Right ventricle myocardium superior (tissue), 1 donor: ENCODE measurements at regions of chr7 and their contacts with region 1.

Region 1: DNA sequence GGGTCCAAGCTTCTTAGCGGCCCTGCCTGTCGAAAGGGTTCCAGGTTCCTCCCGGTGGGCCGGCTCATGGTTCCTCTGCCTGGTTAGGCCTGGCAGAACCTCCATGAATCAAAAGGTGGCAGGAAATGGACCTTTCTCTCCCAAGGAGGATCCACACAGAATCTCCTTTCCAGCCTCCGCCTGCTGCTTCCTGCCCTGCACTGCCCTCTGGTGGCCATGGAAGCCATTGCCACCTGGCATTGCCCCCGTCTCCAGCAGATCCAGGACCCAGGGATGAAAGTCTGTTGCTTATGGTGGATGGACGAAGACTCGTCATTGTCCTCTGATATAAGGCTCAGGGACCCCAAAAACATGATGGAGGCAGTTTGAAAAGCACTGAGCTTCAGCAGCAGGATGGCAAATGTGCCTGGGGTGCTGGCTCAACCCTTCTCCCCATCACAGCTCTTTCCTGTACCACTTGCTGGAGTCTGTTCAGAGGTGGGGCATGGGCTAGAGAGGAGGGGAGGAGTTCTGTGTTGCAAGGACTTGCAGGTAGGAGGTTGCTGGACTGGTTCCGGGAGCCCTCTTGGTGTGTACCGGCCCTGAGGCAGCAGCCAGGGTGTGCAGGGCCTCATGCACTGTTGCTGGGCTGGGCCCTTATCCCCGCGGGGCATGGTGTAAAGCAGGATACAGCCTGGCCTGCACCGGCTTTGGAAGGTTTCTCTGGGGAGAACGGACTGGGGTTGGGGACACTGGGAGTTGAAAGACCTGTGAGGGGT is 11.3 kb upstream of the INMT start:
- DNase-seq: peak; percentile 84
- ATAC-seq: peak; percentile 80

Region 2: DNA sequence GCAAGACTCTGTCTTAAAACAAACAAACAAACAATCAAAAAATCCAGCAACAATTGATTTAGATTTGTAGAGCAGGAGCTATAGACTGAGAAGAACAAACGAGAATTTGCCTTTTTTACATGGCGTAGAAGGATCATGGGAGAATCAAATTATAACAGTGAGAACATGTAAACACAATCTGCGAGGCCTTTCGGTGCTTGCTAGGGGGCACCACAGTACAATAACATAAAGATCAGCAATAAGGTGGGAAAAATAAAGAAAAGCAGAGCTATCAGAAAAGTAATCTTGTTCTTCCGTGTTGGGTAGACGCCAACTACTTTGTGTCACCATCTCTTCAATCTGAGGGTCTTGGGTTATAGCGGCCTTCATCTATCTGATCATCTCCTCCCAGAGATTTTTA is 344.2 kb before region 1 on chr7:
- intact Hi-C with region 1: no loop called
- DNase-seq: no peak
- ATAC-seq: no peak

Region 3: GRCh38 chr7:30625283-30625682 is 115.3 kb before region 1 on chr7:
- intact Hi-C with region 1: loop called (anchors 10 kb)
- DNase-seq: no peak
- ATAC-seq: no peak

Region 4: GRCh38 chr7:30682212-30683083 is 58.2 kb before region 1 on chr7 and contains the start of gene CRHR2:
- intact Hi-C with region 1: loop called (anchors 5 kb)
- DNase-seq: no peak
- ATAC-seq: peak; percentile 80
- total RNA-seq, gene CRHR2: 0.24 TPM

Region 5: GRCh38 chr7:30789334-30789711 is 48.7 kb after region 1 on chr7:
- intact Hi-C with region 1: loop called (anchors 5 kb)
- DNase-seq: no peak
- ATAC-seq: peak; percentile 64

Region 6: GRCh38 chr7:30974605-30975255 is 234.1 kb after region 1 on chr7:
- intact Hi-C with region 1: loop called (anchors 5 kb)
- DNase-seq: peak; percentile 60
- ATAC-seq: peak; percentile 89

Region 7: DNA sequence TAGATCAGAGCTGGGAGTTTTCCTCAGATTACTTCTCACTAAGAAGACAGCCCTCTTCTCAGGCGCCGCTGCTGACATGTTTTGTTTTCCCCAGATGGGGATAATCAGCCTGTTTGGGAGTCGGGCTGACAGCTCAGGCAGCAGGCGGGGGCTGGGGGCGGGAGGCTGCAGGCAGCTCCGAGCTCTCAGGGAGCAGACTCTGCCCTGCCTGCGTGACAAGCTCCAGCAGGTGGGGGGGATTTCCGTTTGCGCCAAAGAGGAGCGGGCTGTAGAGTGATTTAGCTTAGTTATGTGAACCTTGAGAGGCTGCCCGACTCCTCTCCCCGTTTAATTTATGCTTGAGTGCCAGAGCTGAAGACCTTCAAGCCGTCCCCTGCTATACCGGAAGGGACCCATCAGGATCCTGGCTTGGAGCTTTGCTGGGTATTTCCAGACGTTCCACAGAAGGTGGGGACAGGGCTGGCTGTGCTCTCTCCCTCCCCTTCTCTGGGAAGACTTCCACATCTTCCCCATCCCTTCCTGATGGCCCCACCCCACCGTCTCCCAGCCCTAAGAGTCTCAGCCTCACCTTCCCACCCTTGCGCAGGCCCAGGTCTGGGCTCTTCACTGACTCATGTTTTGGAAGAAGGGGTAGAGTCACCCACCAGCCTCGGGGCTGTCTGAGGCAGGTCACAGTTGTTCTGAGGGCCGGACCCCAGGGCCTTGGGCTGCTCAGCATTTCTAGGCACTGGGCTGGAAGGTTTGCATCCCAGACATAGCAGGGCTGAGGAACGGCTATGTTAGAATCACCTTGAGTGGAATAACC is 286.8 kb after region 1 on chr7:
- intact Hi-C with region 1: no loop called
- DNase-seq: peak; percentile 63
- ATAC-seq: peak; percentile 66